ENCODE measurements at regions of chr4 and their contacts with region 1.

Region 1: DNA sequence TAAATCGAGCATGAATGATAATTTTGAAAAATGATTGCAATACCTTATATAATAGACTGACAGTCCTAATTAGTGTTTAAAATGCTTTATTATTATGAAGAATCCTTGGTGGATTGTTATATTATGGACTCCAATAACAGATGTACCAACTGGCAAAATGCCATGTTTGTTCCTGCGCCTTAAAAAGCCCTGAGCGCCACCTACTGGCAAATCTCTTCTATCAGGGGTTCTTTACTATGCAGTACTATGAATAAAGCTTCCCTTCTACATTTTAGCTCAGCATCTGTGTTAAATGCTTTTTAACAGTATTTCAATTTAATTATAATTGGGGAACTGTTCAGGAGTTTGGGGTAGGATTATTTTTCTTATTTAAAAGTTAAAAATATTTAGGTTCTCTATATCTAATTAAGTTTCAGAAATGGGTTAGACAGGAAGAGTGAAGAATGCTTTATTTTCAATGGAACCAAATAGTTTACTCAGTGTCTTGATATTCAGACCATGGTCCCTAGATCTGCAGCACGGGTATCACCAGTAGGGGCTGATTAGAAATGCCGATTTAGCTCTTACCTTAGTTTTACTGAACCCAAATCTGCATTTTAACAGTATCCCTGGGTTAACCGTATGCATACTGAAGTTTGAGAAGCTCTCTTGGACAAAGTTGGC is 20.1 kb downstream of the CFAP97 start:
- DNase-seq: peak; percentile 71 to 80 (median 76)
- H3K4me3 ChIP-seq: no peak overlapping the region
- H3K4me3 Mint-ChIP-seq: no peak overlapping the region
- H3K27ac ChIP-seq: no peak overlapping the region
- H3K27ac Mint-ChIP-seq: no peak overlapping the region
- H3K4me1 ChIP-seq: peaks cover 15% of the 10 kb centered on the region
- H3K4me1 Mint-ChIP-seq: peaks cover 20 to 56% (median 34%) of the 10 kb centered on the region in 4 donors
- H3K27me3 ChIP-seq: no peaks in the 10 kb centered on the region
- H3K27me3 Mint-ChIP-seq: no peaks in the 10 kb centered on the region

Region 2: GRCh38 chr4:185134307-185134869 is 49.4 kb before region 1 on chr4:
- CTCF ChIA-PET with region 1: interaction called, 17 read pairs
- POLR2A ChIA-PET with region 1: no interaction called
- intact Hi-C with region 1: loop called (anchors 1 kb)
- DNase-seq: peak in 4 of 5 donors; percentile 36 to 45 (median 44)
- H3K4me3 ChIP-seq: no peak overlapping the region
- H3K4me3 Mint-ChIP-seq: no peak overlapping the region
- H3K27ac ChIP-seq: no peak overlapping the region
- H3K27ac Mint-ChIP-seq: peak overlapping the region in 1 of 7 donors; percentile 84
- H3K4me1 ChIP-seq: no peaks in the 10 kb centered on the region
- H3K4me1 Mint-ChIP-seq: peaks cover 0 to 4% (median 0%) of the 10 kb centered on the region in 4 donors
- H3K27me3 ChIP-seq: no peaks in the 10 kb centered on the region
- H3K27me3 Mint-ChIP-seq: peaks cover 13 to 19% of the 10 kb centered on the region in 2 donors

Region 3: GRCh38 chr4:185165605-185166063 is 18.1 kb before region 1 on chr4:
- CTCF ChIA-PET with region 1: interaction called, 40 read pairs
- POLR2A ChIA-PET with region 1: no interaction called
- intact Hi-C with region 1: no loop called
- DNase-seq: peak in 4 of 5 donors; percentile 63 to 70 (median 66)
- H3K4me3 ChIP-seq: no peak overlapping the region
- H3K4me3 Mint-ChIP-seq: peak overlapping the region; percentile 29 to 78 (median 60)
- H3K27ac ChIP-seq: no peak overlapping the region
- H3K27ac Mint-ChIP-seq: peak overlapping the region in 6 of 7 donors; percentile 32 to 86 (median 50)
- H3K4me1 ChIP-seq: peaks cover 18% of the 10 kb centered on the region
- H3K4me1 Mint-ChIP-seq: peaks cover 15 to 32% (median 23%) of the 10 kb centered on the region in 4 donors
- H3K27me3 ChIP-seq: no peaks in the 10 kb centered on the region
- H3K27me3 Mint-ChIP-seq: no peaks in the 10 kb centered on the region

Region 4: DNA sequence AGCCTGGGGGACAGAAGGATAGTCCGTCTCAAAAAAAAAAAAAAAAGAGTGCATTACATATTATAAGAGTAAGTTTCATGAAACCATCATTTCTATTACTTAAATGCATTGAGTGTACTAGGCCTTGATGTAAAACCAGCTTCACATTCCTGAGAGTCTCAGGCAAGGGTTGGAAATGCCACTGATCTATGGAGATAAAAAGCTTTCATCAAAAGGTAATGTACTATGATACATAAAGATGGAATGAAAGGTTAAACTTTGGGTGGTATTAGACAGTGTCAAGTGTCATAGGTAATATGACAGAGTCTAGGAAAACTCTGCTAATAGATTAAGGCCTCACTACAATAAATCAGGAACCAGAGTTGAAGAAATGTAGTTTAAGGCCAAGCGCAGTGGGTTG is 12.7 kb after region 1 on chr4:
- CTCF ChIA-PET with region 1: interaction called, 26 read pairs
- POLR2A ChIA-PET with region 1: interaction called, 5 read pairs
- intact Hi-C with region 1: no loop called
- DNase-seq: no peak
- H3K4me3 ChIP-seq: no peak overlapping the region
- H3K4me3 Mint-ChIP-seq: no peak overlapping the region
- H3K27ac ChIP-seq: no peak overlapping the region
- H3K27ac Mint-ChIP-seq: peak overlapping the region in 3 of 7 donors; percentile 22 to 59 (median 41)
- H3K4me1 ChIP-seq: peaks cover 8% of the 10 kb centered on the region
- H3K4me1 Mint-ChIP-seq: peaks cover 23 to 60% (median 34%) of the 10 kb centered on the region in 4 donors
- H3K27me3 ChIP-seq: no peaks in the 10 kb centered on the region
- H3K27me3 Mint-ChIP-seq: no peaks in the 10 kb centered on the region

Region 5: GRCh38 chr4:185304944-185305690 is 121.4 kb after region 1 on chr4:
- CTCF ChIA-PET with region 1: interaction called, 4 read pairs
- POLR2A ChIA-PET with region 1: no interaction called
- intact Hi-C with region 1: loop called (anchors 1 kb)
- DNase-seq: peak; percentile 14 to 51 (median 24)
- H3K4me3 ChIP-seq: no peak overlapping the region
- H3K4me3 Mint-ChIP-seq: no peak overlapping the region
- H3K27ac ChIP-seq: no peak overlapping the region
- H3K27ac Mint-ChIP-seq: peak overlapping the region in 2 of 7 donors; percentile 67 to 71
- H3K4me1 ChIP-seq: no peaks in the 10 kb centered on the region
- H3K4me1 Mint-ChIP-seq: peaks cover 0 to 5% (median 1%) of the 10 kb centered on the region in 4 donors
- H3K27me3 ChIP-seq: no peaks in the 10 kb centered on the region
- H3K27me3 Mint-ChIP-seq: no peaks in the 10 kb centered on the region

Measured in CD4-positive, alpha-beta memory T cell (primary cell).